ENCODE measurements at regions of chr5 and their contacts with region 1.

Region 1: DNA sequence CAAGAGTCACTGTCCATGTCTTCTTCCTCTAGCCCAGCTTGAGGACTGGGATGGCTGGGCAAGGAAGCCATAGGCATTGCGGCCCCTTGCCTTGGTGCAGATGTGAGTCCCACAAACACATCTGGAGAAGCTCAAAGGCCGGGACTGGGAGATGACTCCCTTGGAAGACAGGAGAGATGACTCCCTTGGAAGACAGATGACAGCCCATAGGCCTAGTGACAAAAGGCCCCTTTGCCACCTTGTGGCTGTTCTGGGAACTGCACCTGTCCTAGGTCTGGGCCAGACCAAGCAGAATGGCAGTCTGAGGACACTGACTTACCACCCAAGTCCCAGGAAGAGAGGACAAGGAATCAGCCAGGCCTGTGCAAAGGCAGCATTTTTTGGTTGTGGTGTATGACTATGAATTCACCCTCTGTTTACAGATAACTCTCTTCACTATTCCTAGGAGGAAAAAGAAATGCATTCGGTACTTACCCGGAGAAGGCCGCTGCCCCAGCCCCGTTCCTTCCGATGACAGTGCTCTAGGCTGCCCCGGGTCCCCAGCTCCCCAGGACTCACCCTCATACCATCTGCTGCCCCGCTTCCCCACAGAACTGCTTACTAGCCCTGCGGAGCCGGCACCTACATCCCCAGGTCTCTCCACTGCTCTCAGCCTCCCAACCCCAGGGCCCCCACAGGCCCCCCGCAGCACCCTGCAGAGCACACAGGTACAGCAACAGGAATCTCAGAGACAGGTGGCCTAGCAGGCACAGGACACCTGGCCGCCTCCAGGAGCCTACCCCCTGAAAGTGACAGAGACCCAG is 30.8 kb downstream of the SKP1 start:
- DNase-seq: peak; percentile 73 to 89 (median 84)
- ATAC-seq: peak; percentile 71
- H3K4me3 ChIP-seq: no peak overlapping the region
- H3K4me3 Mint-ChIP-seq: peak overlapping the region; percentile 46
- H3K27ac ChIP-seq: peak overlapping the region in 1 of 2 donors; percentile 48
- H3K27ac Mint-ChIP-seq: peak overlapping the region; percentile 98
- H3K4me1 ChIP-seq: peaks cover 50% of the 10 kb centered on the region
- H3K4me1 Mint-ChIP-seq: peaks cover 64% of the 10 kb centered on the region
- H3K27me3 ChIP-seq: no peaks in the 10 kb centered on the region
- H3K27me3 Mint-ChIP-seq: no peaks in the 10 kb centered on the region
- CTCF ChIP-seq: peak; percentile 95

Region 2: GRCh38 chr5:134161513-134162395 is 15.8 kb after region 1 on chr5:
- CTCF ChIA-PET with region 1: interaction called, 7 read pairs
- POLR2A ChIA-PET with region 1: interaction called, 184 read pairs
- intact Hi-C with region 1: no loop called
- DNase-seq: no peak
- ATAC-seq: no peak
- H3K4me3 ChIP-seq: no peak overlapping the region
- H3K4me3 Mint-ChIP-seq: no peak overlapping the region
- H3K27ac ChIP-seq: no peak overlapping the region
- H3K27ac Mint-ChIP-seq: peak overlapping the region; percentile 26
- H3K4me1 ChIP-seq: peaks cover 13% of the 10 kb centered on the region
- H3K4me1 Mint-ChIP-seq: peaks cover 54% of the 10 kb centered on the region
- H3K27me3 ChIP-seq: no peaks in the 10 kb centered on the region
- H3K27me3 Mint-ChIP-seq: no peaks in the 10 kb centered on the region
- CTCF ChIP-seq: no peak

Measured in CD4-positive, alpha-beta T cell (primary cell).